CD8-positive, alpha-beta memory T cell (primary cell): ENCODE measurements at regions of chrX and their contacts with region 1.

Region 1: DNA sequence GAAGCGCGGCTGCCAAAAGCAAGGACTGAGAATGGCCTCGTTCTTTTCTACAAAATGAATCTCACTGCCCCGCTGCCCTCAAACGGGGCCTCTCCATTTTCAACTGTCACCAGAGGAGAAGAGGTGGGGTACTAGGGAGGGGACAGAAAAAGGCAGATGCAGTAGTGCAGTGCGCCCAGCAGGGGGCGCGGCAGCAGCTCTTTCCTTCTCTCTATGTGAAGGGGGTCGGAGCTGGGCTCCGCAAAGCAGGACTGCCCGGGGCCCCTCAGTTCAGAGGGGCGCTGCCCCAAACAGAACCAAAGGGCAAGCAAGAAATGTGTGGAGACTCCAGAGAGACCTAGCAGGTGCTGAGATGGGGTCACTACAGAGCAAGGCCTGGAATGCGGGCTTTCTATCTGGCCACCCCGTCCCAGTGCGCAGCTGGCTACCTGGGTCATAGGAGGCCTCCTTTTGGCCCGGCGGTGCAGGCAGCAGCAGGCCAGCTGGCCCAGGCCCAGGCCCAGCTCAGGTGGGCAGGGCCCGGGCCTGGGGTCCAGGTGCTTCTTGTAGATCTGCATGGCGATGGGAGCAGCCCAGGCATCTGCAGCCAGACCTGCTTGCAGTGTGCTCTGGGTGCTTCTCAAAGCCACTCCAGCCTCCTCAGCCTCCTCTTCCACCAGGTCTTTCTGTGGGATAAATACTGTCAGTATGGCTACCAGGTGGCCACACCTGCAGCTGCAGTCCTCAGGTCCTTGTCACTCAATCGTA is 5.9 kb downstream of the IRAK1 start:
- DNase-seq: peak; percentile 24 to 66 (median 49)
- H3K4me3 ChIP-seq: no peak overlapping the region
- H3K4me3 Mint-ChIP-seq: peak overlapping the region in 1 of 7 donors; percentile 63
- H3K27ac ChIP-seq: no peak overlapping the region
- H3K27ac Mint-ChIP-seq: peak overlapping the region in 6 of 8 donors; percentile 29 to 89 (median 64)
- H3K4me1 ChIP-seq: no peaks in the 10 kb centered on the region
- H3K4me1 Mint-ChIP-seq: peaks cover 7 to 23% (median 11%) of the 10 kb centered on the region in 3 donors
- H3K27me3 ChIP-seq: no peaks in the 10 kb centered on the region
- H3K27me3 Mint-ChIP-seq: peaks cover 0 to 5% of the 10 kb centered on the region in 2 donors

Region 2: DNA sequence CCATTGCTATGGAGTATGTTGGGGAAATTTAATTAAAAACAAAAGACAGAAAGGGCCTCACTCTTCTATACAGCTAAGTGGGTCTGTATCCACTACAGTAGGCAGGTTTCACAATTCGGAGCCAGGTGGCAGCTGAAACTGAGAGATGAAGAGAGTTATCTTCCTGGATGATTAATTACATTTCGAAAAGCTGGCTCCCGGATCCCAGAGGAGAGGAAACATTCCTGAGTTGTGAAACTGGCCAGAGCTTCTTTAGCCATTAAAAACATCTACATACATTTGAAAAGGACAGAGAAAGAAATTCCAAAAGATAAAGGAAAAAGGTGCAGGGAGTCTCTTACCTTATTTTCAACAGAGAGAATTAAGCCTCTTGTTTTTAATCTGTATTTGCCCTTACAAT is 167.9 kb before region 1 on chrX:
- CTCF ChIA-PET with region 1: no interaction called
- POLR2A ChIA-PET with region 1: no interaction called
- DNase-seq: no peak
- H3K4me3 ChIP-seq: no peak overlapping the region
- H3K4me3 Mint-ChIP-seq: no peak overlapping the region
- H3K27ac ChIP-seq: no peak overlapping the region
- H3K27ac Mint-ChIP-seq: no peak overlapping the region
- H3K4me1 ChIP-seq: no peaks in the 10 kb centered on the region
- H3K4me1 Mint-ChIP-seq: no peaks in the 10 kb centered on the region
- H3K27me3 ChIP-seq: no peaks in the 10 kb centered on the region
- H3K27me3 Mint-ChIP-seq: peaks cover 10% of the 10 kb centered on the region in 2 donors

Region 3: DNA sequence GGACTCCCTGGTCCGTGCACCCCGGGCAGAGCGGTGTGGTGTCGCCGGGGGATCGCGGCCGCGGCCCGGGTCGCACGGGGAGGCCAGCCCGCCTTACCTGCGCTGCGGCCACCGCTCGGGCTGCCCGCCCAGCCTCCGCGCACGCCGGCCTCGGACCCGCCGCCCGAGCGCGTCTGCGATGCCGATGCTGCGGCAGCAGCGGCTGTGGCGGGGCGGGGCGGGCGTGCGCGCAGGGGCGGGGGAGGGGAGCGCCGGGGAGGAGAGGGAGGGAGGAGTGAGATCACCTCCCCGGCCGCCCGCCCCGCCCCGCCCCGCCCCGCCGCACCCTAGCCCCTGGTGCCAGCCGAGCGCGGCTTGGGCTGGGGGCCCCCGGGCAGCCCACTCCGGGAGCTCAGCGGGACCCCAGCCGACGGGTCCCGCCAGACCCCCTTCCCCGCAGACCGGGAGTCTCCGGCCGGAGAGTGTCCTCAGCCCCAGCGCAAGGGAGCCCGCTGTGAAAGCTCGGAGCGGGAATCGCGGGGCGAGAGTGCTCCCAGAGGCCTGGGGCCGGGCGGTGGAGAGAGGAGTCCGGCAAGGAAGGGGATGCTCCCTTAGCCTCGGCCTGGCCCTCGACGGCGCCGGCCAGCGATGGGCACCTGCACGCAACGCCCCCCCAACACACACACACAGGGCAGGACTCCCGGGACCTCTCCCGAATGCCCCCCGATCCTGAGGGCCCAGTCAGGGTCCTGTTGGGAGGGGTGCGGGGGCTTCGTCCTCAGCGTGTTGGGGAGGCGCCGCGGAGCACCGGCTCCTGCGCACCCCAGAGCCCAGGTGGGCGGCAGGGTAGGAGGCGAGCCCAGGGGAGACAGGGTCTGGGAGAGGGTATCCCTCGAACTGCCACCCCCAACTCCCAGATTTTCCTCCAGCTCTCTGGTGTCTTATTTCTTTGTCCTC is 127.6 kb before region 1 on chrX and contains the start of gene L1CAM:
- CTCF ChIA-PET with region 1: no interaction called
- POLR2A ChIA-PET with region 1: no interaction called
- DNase-seq: no peak
- H3K4me3 ChIP-seq: no peak within 1 kb of the TSS
- H3K4me3 Mint-ChIP-seq: peak within 1 kb of the TSS in 4 of 7 donors; percentile 28 to 57 (median 46)
- H3K27ac ChIP-seq: no peak within 1 kb of the TSS
- H3K27ac Mint-ChIP-seq: peak within 1 kb of the TSS in 1 of 8 donors; percentile 57
- H3K4me1 ChIP-seq: peaks cover 6% of the 10 kb centered on the region
- H3K4me1 Mint-ChIP-seq: peaks cover 0 to 5% (median 4%) of the 10 kb centered on the region in 3 donors
- H3K27me3 ChIP-seq: peaks cover 15% of the 10 kb centered on the region
- H3K27me3 Mint-ChIP-seq: peaks cover 18 to 33% of the 10 kb centered on the region in 2 donors
- total RNA-seq, gene L1CAM: 0.62 to 0.79 TPM

Region 4: GRCh38 chrX:154002215-154002719 is 11.5 kb before region 1 on chrX:
- CTCF ChIA-PET with region 1: interaction called, 15 read pairs
- POLR2A ChIA-PET with region 1: no interaction called
- DNase-seq: peak in 4 of 5 donors; percentile 21 to 72 (median 43)
- H3K4me3 ChIP-seq: peak overlapping the region; percentile 53
- H3K4me3 Mint-ChIP-seq: peak overlapping the region; percentile 55 to 88 (median 80)
- H3K27ac ChIP-seq: peak overlapping the region; percentile 78
- H3K27ac Mint-ChIP-seq: peak overlapping the region; percentile 59 to 94 (median 80)
- H3K4me1 ChIP-seq: peaks cover 8% of the 10 kb centered on the region
- H3K4me1 Mint-ChIP-seq: peaks cover 16 to 17% (median 16%) of the 10 kb centered on the region in 3 donors
- H3K27me3 ChIP-seq: no peaks in the 10 kb centered on the region
- H3K27me3 Mint-ChIP-seq: peaks cover 0 to 15% of the 10 kb centered on the region in 2 donors